IMR-90 (cell line): ENCODE measurements at regions of chr2 and their contacts with region 1.

Region 1: GRCh38 chr2:215435809-215436704 is at the start of gene FN1:
- DNase-seq: peak; percentile 98
- ATAC-seq: peak; percentile 82
- H3K4me3 ChIP-seq: peak within 1 kb of the TSS; percentile 65
- H3K27ac ChIP-seq: peak within 1 kb of the TSS; percentile 94
- H3K4me1 ChIP-seq: peaks cover 8% of the 10 kb centered on the region
- H3K27me3 ChIP-seq: no peaks in the 10 kb centered on the region
- CTCF ChIP-seq: no peak
- POLR2A ChIP-seq: peak; percentile 99
- RAD21 ChIP-seq: peak; percentile 11
- total RNA-seq, gene FN1: 7,693 and 8,243 TPM in 2 replicates

Region 2: DNA sequence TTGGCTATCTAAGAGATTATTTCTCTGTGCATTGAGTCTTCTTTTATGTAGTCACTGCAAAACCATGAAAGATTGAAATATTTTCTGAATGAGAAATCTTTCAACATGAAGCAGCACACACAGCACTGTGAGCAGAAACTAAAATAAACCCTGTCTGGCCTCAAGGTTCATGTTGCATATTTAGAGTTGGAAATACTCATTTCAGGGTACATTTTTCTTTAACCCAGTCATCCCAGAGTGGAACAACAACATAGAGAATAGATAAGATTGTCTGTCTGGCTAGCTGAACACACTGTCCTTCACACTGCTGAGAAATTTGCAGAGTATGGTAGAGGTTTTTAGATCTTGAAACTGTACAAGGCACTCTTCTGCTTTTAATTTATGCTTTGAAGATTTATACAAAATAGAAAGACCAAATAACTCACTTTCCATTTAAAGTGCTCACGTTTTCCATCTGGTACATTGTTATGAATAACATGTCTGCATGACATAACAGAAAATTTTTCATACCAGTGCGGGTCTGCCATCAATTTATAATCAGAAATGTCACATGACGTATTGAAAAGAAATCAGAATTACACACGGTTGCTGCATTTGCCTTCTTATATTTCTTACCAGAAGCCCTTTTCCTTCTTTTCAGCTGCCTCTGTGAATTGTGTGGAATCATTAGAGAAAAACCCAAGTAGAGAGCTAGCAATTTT is 24.8 kb after region 1 on chr2:
- CTCF ChIA-PET with region 1: no interaction called
- POLR2A ChIA-PET with region 1: no interaction called
- dilution Hi-C with region 1: no loop called
- in situ Hi-C with region 1: no loop called
- intact Hi-C with region 1: loop called (anchors 1 kb)
- DNase-seq: peak; percentile 97
- ATAC-seq: peak; percentile 94
- H3K4me3 ChIP-seq: no peak overlapping the region
- H3K27ac ChIP-seq: peak overlapping the region; percentile 63; the same call in 1 of the 2 replicates
- H3K4me1 ChIP-seq: peaks cover 13% of the 10 kb centered on the region
- H3K27me3 ChIP-seq: no peaks in the 10 kb centered on the region
- CTCF ChIP-seq: no peak
- POLR2A ChIP-seq: peak; percentile 35; the same call in 1 of the 2 replicates
- RAD21 ChIP-seq: peak; percentile 36

Region 3: DNA sequence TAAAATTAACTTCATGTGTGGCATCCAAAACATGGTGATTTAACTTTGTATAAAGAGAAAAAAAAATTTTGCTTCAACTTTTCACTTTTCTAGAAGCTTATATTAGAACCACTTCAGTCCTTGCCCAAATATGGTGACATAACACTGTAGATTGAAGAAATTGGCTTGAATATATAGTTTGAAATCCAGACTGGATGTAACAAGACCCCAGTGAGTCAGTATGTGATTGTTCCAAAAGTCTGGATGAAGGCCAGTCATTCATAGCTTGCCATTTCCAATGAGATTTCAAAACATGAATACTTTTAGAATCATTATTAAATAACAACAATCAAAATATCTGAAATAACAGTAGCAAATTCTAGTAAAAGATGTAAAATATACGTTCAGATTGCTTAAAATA is 104.6 kb after region 1 on chr2:
- CTCF ChIA-PET with region 1: no interaction called
- POLR2A ChIA-PET with region 1: no interaction called
- dilution Hi-C with region 1: no loop called
- in situ Hi-C with region 1: no loop called
- intact Hi-C with region 1: loop called (anchors 1 kb)
- DNase-seq: peak; percentile 97
- ATAC-seq: peak; percentile 73
- H3K4me3 ChIP-seq: no peak overlapping the region
- H3K27ac ChIP-seq: peak overlapping the region; percentile 56; the same call in 1 of the 2 replicates
- H3K4me1 ChIP-seq: peaks cover 11% of the 10 kb centered on the region
- H3K27me3 ChIP-seq: no peaks in the 10 kb centered on the region
- CTCF ChIP-seq: no peak
- POLR2A ChIP-seq: no peak
- RAD21 ChIP-seq: no peak

Region 4: GRCh38 chr2:215664847-215665525 is 228.9 kb after region 1 on chr2:
- CTCF ChIA-PET with region 1: no interaction called
- POLR2A ChIA-PET with region 1: no interaction called
- dilution Hi-C with region 1: no loop called
- in situ Hi-C with region 1: no loop called
- intact Hi-C with region 1: loop called (anchors 2 kb)
- DNase-seq: peak; percentile 93
- ATAC-seq: peak; percentile 63
- H3K4me3 ChIP-seq: no peak overlapping the region
- H3K27ac ChIP-seq: 0 out of 2 replicates have a peak overlapping the region, but pooled peaks have one; percentile 3
- H3K4me1 ChIP-seq: peaks cover 10% of the 10 kb centered on the region
- H3K27me3 ChIP-seq: no peaks in the 10 kb centered on the region
- CTCF ChIP-seq: no peak
- POLR2A ChIP-seq: no peak
- RAD21 ChIP-seq: peak; percentile 31; the same call in 1 of the 2 replicates

Region 5: DNA sequence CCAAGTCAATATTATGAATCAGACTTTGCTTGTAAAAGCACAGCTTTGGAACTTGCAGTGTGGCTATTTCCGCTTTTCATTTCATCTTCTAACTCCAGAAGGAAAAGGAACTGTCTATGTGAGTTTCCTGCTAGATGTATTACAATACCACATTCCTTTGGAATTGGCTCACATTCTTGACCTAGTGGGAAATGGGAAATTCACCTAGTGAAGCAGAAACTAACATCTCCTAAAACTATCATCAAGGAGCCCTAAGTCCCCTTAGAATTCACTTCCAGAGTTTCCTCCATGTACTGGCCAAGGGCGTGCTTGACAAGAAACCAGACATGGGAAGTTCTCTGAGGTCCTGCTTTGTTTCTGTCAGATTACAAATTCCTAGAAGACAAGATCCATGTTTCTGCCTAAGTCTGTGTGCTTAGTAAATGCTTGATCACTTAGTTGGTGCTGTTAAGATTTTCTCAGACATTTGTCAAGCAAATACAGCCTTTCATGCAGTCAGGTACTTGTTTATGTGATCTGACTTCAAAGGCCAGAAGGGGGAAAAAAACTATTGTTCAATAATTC is 275.5 kb after region 1 on chr2:
- CTCF ChIA-PET with region 1: no interaction called
- POLR2A ChIA-PET with region 1: no interaction called
- dilution Hi-C with region 1: no loop called
- in situ Hi-C with region 1: no loop called
- intact Hi-C with region 1: loop called (anchors 1 kb)
- DNase-seq: peak; percentile 78
- ATAC-seq: peak; percentile 31; the same call in 1 of the 2 replicates
- H3K4me3 ChIP-seq: no peak overlapping the region
- H3K27ac ChIP-seq: peak overlapping the region; percentile 21; the same call in 1 of the 2 replicates
- H3K4me1 ChIP-seq: peaks cover 26% of the 10 kb centered on the region
- H3K27me3 ChIP-seq: no peaks in the 10 kb centered on the region
- CTCF ChIP-seq: no peak
- POLR2A ChIP-seq: no peak
- RAD21 ChIP-seq: no peak

Region 6: DNA sequence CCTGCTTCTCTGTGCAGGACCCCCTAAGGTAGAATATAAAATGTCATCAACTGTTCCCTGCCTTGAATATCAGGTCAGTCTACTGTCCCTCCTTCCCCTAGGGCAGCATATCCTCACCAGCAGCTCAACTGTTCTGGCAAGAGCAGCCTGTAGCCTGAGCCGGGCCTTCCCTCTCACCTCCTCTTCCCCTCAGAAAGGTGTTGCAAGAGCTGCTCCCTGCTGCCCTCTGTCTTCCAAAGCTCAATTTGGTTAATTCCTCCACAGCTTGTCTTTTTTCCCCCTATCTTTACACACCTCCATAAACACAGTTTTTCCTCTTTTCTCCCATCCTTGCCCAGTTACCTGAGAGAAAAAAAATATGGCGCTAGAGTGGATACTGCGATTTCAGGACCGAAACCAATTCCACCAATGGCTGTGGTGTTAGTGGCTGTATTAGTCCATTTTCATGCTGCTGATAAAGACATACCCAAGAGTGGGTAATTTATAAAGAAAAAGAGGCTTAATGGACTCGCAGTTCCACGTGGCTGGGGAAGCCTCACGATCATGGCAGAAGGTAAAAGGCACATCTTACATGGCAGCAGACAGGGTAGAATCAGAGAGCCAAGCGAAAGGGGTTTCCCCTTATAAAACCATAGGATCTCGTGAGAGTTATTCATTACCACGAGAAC is 392.6 kb after region 1 on chr2:
- CTCF ChIA-PET with region 1: no interaction called
- POLR2A ChIA-PET with region 1: no interaction called
- dilution Hi-C with region 1: no loop called
- in situ Hi-C with region 1: no loop called
- intact Hi-C with region 1: loop called (anchors 2 kb)
- DNase-seq: peak; percentile 62
- ATAC-seq: peak; percentile 30
- H3K4me3 ChIP-seq: no peak overlapping the region
- H3K27ac ChIP-seq: no peak overlapping the region
- H3K4me1 ChIP-seq: peaks cover 11% of the 10 kb centered on the region
- H3K27me3 ChIP-seq: no peaks in the 10 kb centered on the region
- CTCF ChIP-seq: peak; percentile 58
- POLR2A ChIP-seq: no peak
- RAD21 ChIP-seq: peak; percentile 62